ENCODE measurements at regions of chr14 and their contacts with region 1.

Region 1: GRCh38 chr14:73949744-73950734 is at the starts of genes COQ6 and FAM161B:
- DNase-seq: peak; percentile 98
- H3K4me3 ChIP-seq: peak within 1 kb of the TSS; percentile 68 to 91 (median 85)
- H3K27ac ChIP-seq: peak within 1 kb of the TSS; percentile 92
- H3K4me1 ChIP-seq: no peaks in the 10 kb centered on the region
- H3K27me3 ChIP-seq: no peaks in the 10 kb centered on the region
- CTCF ChIP-seq: peak in 1 of 2 donors; percentile 36
- total RNA-seq, gene COQ6: 20.0 to 22.6 TPM
- total RNA-seq, gene FAM161B: 3.5 to 4.0 TPM

Region 2: GRCh38 chr14:73991092-73991491 is 41.1 kb after region 1 on chr14:
- CTCF ChIA-PET with region 1: no interaction called
- dilution Hi-C with region 1: no loop called
- in situ Hi-C with region 1: no loop called
- intact Hi-C with region 1: no loop called
- DNase-seq: no peak
- H3K4me3 ChIP-seq: no peak overlapping the region
- H3K27ac ChIP-seq: no peak overlapping the region
- H3K4me1 ChIP-seq: no peaks in the 10 kb centered on the region
- H3K27me3 ChIP-seq: no peaks in the 10 kb centered on the region
- CTCF ChIP-seq: no peak

Region 3: DNA sequence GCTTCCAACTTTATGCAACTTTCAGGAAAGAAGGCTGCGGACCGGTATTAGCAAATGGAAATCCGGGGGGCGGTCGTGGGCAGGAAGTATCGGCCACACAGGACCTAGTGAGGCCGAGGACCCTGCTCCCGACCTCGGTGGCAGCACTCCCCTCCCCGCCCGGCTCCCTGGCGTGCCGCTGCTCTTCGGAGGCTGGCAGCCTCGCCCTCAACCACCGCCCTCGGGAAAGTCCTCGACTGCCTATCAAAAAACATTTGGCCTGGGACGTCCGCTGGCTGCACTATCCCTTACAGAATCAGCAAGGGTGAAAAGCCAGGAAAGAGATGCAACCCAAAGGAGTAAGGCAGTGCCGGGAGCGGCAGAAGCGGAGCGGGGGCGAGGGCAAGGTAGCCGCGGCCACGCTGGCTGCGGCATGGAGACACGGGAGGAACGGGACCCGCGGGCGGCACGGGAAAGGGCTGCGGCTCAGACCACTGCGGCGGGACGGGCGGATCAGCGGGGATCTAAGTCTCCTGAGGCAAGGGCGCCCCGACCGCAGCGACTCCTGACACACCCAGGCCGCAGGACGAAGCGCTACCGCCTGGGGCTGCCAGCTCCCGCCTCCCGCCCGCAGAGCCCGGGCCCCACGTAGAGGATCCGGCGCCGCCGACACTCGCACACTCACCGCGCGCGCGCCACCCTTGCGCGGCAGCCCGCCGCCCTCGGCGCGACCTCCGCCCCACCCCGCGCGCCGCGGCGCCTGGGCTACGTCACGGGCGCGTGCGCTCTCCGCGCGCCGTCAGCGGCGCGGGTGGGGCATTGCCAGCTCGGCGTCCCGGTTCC is 68.8 kb after region 1 on chr14 and contains the starts of genes BBOF1 and ENTPD5:
- CTCF ChIA-PET with region 1: no interaction called
- dilution Hi-C with region 1: no loop called
- in situ Hi-C with region 1: no loop called
- intact Hi-C with region 1: loop called (anchors 2 kb)
- DNase-seq: peak; percentile 82
- H3K4me3 ChIP-seq: peak within 1 kb of the TSS; percentile 73 to 93 (median 89)
- H3K27ac ChIP-seq: peak within 1 kb of the TSS; percentile 89
- H3K4me1 ChIP-seq: no peaks in the 10 kb centered on the region
- H3K27me3 ChIP-seq: no peaks in the 10 kb centered on the region
- CTCF ChIP-seq: no peak
- total RNA-seq, gene BBOF1: 2.4 to 7.2 TPM
- total RNA-seq, gene ENTPD5: 16.0 to 19.5 TPM